ENCODE measurements at regions of chr6 and their contacts with region 1.

Region 1: DNA sequence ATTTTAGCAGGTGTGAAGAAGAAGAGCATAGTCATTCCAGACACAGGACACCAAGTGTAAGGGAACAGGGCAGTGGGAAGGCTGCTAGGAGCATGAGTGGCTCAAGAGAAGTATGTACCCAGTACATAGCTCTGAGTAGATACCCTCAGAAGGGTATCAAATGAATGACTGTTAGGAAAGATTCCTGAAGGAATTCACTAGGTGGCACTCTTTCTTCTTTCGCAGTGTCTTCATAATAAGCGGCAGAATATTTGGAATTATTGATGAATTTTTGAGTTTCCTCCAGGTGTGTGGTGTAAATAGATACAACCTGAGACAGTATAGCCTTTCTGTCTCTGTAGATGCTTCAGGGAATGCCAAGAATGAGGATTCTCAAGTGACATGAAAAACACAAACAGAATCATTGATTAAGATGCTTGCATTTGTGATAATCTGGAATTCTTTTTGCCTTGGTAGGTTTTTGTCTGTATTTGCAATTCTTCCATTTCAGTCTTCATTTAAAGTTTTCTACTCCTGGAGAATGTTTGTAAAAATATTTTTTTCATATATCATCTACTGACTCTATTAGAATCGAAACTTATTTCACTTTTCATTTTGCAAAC is 264.3 kb upstream of the RIMS1 start:
- DNase-seq: peak; percentile 21
- H3K4me3 Mint-ChIP-seq: no peak overlapping the region
- H3K27ac Mint-ChIP-seq: no peak overlapping the region
- H3K4me1 Mint-ChIP-seq: no peaks in the 10 kb centered on the region
- H3K27me3 Mint-ChIP-seq: peaks cover 40% of the 10 kb centered on the region
- CTCF ChIP-seq: peak; percentile 45

Region 2: DNA sequence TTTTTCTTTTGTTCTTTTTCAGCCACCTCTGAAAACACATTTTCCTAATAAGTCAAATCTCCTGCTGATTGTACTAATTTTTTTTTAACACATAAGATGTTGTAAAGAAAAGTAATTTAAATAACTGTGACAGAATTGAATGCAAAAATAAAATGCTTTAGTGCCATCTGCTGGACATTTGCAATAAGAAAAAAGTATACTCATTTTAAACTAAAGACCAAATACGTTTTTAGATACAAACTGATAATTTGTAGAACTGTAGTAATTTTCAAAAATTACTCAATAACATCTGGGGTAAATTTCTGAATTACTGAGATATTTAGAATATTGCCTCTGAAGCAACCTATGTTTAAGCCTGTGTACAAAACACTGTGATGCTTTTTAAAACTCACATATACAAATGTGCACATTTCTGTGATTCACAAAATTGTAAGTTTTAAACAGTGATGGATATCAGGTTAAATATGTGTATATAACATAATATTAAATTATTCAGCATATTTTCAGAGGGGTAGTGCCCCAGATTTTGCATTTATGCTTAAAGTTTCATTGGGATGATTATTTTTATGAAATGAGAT is 463.1 kb after region 1 on chr6:
- CTCF ChIA-PET with region 1: interaction called, 4 read pairs
- POLR2A ChIA-PET with region 1: no interaction called
- intact Hi-C with region 1: loop called (anchors 2 kb)
- DNase-seq: peak; percentile 14
- H3K4me3 Mint-ChIP-seq: no peak overlapping the region
- H3K27ac Mint-ChIP-seq: no peak overlapping the region
- H3K4me1 Mint-ChIP-seq: no peaks in the 10 kb centered on the region
- H3K27me3 Mint-ChIP-seq: peaks cover 67% of the 10 kb centered on the region
- CTCF ChIP-seq: peak; percentile 42